Transverse colon (tissue), 4 donors: ENCODE measurements at regions of chr11 and their contacts with region 1.

Region 1: GRCh38 chr11:61994981-61995380 is 27.5 kb upstream of the FTH1 start:
- DNase-seq: no peak
- H3K4me3 ChIP-seq: no peak overlapping the region
- H3K27ac ChIP-seq: no peak overlapping the region
- H3K4me1 ChIP-seq: no peaks in the 10 kb centered on the region
- H3K27me3 ChIP-seq: no peaks in the 10 kb centered on the region
- CTCF ChIP-seq: no peak
- EP300 ChIP-seq: no peak
- POLR2A ChIP-seq: no peak

Region 2: GRCh38 chr11:61955422-61956135 is 39.4 kb before region 1 on chr11:
- in situ Hi-C with region 1: no loop called
- intact Hi-C with region 1: loop called (anchors 1 kb)
- DNase-seq: peak; percentile 46
- H3K4me3 ChIP-seq: peak overlapping the region; percentile 18 to 46 (median 30)
- H3K27ac ChIP-seq: peak overlapping the region; percentile 73 to 74 (median 74)
- H3K4me1 ChIP-seq: peaks cover 0 to 15% (median 12%) of the 10 kb centered on the region in 4 donors
- H3K27me3 ChIP-seq: peaks cover 16% of the 10 kb centered on the region
- CTCF ChIP-seq: no peak
- EP300 ChIP-seq: no peak
- POLR2A ChIP-seq: no peak